ENCODE measurements at regions of chr2 and their contacts with region 1.

Region 1: GRCh38 chr2:105744909-105745853 is at the start of gene NCK2:
- DNase-seq: no peak
- H3K4me3 Mint-ChIP-seq: peak within 1 kb of the TSS; percentile 93
- H3K27ac Mint-ChIP-seq: peak within 1 kb of the TSS; percentile 94
- H3K4me1 Mint-ChIP-seq: peaks cover 84% of the 10 kb centered on the region
- H3K27me3 Mint-ChIP-seq: no peaks in the 10 kb centered on the region
- total RNA-seq, gene NCK2: 79.9 and 86.8 TPM in 2 replicates

Region 2: DNA sequence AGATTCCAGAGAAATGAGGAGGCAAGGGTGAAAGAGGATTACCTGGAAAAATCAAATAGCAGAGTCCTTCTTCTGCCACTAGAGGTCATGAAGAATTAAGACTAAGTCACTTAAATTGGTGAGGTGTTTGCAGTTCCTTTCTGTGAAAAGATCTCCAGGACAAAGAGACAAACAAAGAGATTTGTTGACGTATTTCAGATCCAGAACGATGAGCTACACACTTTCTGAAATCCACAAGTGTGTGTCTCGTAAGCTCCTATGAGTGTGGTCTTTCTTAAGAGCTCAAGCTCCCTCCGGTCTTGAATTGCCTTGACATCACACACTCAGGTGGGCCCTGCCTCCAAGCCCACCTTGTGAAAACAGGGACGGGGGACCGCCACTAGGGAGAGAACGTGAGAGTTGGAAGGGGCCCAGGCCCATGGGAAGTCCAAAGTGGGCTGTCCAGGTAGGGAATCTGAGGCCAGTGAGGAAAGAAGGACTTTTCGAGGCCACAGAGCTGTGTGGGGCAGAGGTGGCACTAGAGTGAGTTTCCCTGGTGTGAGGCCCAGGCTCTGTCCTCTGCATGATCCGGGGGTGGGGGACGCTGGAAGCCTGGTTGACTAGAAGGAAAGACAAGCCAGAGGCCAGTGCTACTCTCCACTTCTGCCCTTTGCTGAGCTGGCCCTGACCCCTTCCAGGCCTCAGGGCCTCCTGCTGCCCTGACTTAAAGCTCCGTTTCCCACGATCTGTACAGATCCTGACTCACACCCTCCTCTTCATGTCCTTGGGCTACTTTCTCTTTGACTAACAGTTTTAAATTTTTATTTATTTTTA is 168.5 kb before region 1 on chr2:
- intact Hi-C with region 1: loop called (anchors 2 kb)
- DNase-seq: no peak
- H3K4me3 Mint-ChIP-seq: no peak overlapping the region
- H3K27ac Mint-ChIP-seq: no peak overlapping the region
- H3K4me1 Mint-ChIP-seq: peaks cover 15% of the 10 kb centered on the region
- H3K27me3 Mint-ChIP-seq: no peaks in the 10 kb centered on the region

Region 3: GRCh38 chr2:105734762-105735538 is 10.2 kb before region 1 on chr2:
- intact Hi-C with region 1: loop called (anchors 1 kb)
- DNase-seq: no peak
- H3K4me3 Mint-ChIP-seq: no peak overlapping the region
- H3K27ac Mint-ChIP-seq: no peak overlapping the region
- H3K4me1 Mint-ChIP-seq: peaks cover 42% of the 10 kb centered on the region
- H3K27me3 Mint-ChIP-seq: peaks cover 2% of the 10 kb centered on the region

Region 4: DNA sequence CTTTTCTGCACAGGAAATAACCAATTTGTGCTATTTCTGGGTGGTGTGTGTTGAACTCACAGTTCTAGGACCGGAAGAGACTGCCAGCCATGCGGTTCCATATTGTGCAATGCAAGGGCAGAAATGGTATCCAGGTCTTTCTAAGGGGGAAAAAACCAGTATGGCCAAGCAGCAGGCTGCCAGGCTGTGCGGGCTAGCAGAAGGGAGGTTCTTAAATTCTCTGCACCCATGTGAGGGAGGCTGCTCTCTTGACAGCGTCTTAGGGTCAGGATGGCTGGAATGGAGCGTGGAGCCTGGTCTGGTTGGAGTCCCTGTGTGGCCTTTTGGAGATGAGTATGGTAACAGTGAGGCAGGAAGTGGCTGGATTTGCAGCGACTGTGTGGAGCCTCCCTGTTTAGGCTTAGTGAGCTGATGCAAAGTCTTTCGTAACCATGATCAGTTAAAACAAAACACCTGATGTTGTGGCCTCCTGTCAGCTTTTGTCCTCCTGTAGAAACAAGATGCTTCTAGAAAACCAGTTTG is 52.2 kb after region 1 on chr2:
- intact Hi-C with region 1: loop called (anchors 1 kb)
- DNase-seq: no peak
- H3K4me3 Mint-ChIP-seq: peak overlapping the region; percentile 77
- H3K27ac Mint-ChIP-seq: peak overlapping the region; percentile 97
- H3K4me1 Mint-ChIP-seq: peaks cover 89% of the 10 kb centered on the region
- H3K27me3 Mint-ChIP-seq: no peaks in the 10 kb centered on the region

Region 5: DNA sequence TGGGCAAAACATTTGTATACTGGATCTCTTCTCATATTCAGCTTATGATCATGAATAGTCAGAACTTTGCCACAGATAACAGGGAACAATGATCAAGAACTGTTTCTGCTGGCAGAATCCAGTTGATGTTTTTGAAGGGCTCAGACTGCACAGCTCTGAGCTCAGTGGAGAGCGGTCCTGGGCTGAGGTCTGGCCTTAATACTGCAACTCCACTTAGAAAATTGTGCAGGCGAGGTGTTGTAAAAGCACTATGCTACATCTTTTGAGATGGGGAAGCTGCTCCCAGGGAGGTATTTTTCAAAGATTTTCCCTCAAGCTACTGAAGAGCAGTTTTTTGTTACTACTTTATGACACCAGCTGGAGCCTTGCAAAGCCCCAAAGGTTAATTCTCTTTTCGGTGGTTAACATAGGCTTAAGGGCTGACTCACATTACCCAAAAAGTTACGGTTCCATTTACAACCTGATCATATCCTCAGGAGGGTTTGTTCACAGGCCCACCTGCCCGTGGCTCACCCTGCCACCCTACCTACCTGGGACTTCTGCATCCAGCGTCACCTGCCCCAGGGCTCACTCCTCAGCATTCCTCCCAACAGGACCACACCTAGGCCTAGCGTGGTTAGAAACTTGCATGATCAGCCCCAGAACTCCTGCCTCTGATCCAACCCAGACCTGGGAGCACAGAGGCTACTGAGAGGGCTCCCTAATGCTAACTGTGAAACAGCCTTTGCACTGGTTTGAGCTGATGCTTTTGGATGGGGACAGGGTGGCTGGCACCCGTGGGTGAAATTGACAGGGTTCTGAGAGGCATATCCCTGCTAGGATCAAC is 113.9 kb after region 1 on chr2:
- intact Hi-C with region 1: loop called (anchors 1 kb)
- DNase-seq: no peak
- H3K4me3 Mint-ChIP-seq: peak overlapping the region; percentile 53
- H3K27ac Mint-ChIP-seq: peak overlapping the region; percentile 89
- H3K4me1 Mint-ChIP-seq: peaks cover 90% of the 10 kb centered on the region
- H3K27me3 Mint-ChIP-seq: peaks cover 2% of the 10 kb centered on the region

Region 6: GRCh38 chr2:106098081-106098480 is 352.9 kb after region 1 on chr2:
- intact Hi-C with region 1: loop called (anchors 1 kb)
- DNase-seq: no peak
- H3K4me3 Mint-ChIP-seq: no peak overlapping the region
- H3K27ac Mint-ChIP-seq: no peak overlapping the region
- H3K4me1 Mint-ChIP-seq: peaks cover 31% of the 10 kb centered on the region
- H3K27me3 Mint-ChIP-seq: no peaks in the 10 kb centered on the region

Measured in activated T-helper 1 cell treated with anti-CD3 and anti-CD28 coated beads, Interleukin-12 subunit alpha, Interleukin-12 subunit beta, Interleukin-2, Interleukin-4 antibody, amounts not matched to agents 30 ng/mL and 10 ng/mL and 1 ng/mL, durations not matched to agents 14 hours and 24 hours and 36 hours (primary cell).